GM12878 (cell line): ENCODE measurements at regions of chr3 and their contacts with region 1.

Region 1: DNA sequence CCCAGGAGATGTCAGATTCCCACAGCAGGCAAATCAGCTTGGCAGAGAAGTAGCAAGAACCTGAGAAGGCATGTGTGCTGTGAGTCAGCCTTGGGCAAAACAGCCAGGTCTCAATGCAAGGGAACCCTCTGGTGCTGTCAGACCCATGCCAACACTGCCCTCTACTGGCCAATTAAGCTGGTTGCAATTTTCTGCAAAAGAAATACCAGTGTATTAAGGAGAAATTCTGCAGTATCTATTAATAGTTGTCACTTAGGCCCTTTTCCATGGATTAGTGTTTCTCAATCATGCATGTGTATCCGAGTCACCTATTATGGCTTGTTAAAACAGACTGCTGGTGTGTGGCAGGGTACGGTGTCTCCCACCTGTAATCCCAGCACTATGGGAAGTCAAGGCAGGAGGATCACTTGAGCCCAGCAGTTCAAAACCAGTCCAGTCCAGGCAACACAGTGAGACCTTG is 26.2 kb downstream of the MAP4 start:
- DNase-seq: peak; percentile 37
- ATAC-seq: peak; percentile 98
- H3K4me3 ChIP-seq: no peak overlapping the region
- H3K27ac ChIP-seq: no peak overlapping the region
- H3K4me1 ChIP-seq: no peaks in the 10 kb centered on the region
- H3K27me3 ChIP-seq: no peaks in the 10 kb centered on the region
- CTCF ChIP-seq: peak; percentile 81 to 91 (median 90); a peak in 5 of 6 replicates
- EP300 ChIP-seq: no peak
- POLR2A ChIP-seq: no peak
- RAD21 ChIP-seq: peak; percentile 97

Region 2: GRCh38 chr3:47824541-47825473 is 165.2 kb before region 1 on chr3:
- CTCF ChIA-PET with region 1: interaction called, 28 read pairs
- POLR2A ChIA-PET with region 1: no interaction called
- RAD21 ChIA-PET with region 1: interaction called, 5 read pairs
- SMC1A ChIA-PET with region 1: interaction called, 10 read pairs
- in situ Hi-C with region 1: loop called (anchors 10 kb)
- intact Hi-C with region 1: no loop called
- DNase-seq: peak; percentile 25
- ATAC-seq: peak; percentile 100
- H3K4me3 ChIP-seq: peak overlapping the region; percentile 98
- H3K27ac ChIP-seq: peak overlapping the region; percentile 85
- H3K4me1 ChIP-seq: peaks cover 6% of the 10 kb centered on the region
- H3K27me3 ChIP-seq: no peaks in the 10 kb centered on the region
- CTCF ChIP-seq: peak; percentile 70 to 92 (median 86); a peak in 5 of 6 replicates
- EP300 ChIP-seq: no peak
- POLR2A ChIP-seq: peak; percentile 95
- RAD21 ChIP-seq: peak; percentile 38; the same call in 1 of the 2 replicates

Region 3: DNA sequence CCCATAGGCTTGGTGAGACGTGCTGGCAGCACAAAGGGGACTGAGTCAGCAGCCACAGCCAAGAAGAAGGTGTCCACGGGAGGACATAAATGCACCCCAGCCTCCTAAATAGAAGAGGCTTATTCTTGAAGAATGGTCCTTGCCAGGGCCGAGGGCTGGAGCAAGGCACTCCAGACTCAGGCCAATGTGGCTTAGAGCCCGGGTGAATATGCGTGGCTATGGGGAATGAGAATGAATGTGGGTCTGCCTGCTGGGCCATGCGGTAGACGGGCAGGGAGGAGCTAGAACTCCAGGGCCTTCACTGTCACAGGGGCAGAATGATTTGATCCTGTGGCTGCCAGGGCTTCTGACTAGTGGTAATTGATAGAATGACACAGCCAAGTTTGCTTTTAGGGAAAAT is 153.0 kb before region 1 on chr3:
- CTCF ChIA-PET with region 1: interaction called, 56 read pairs
- POLR2A ChIA-PET with region 1: interaction called, 3 read pairs
- RAD21 ChIA-PET with region 1: interaction called, 19 read pairs
- SMC1A ChIA-PET with region 1: interaction called, 15 read pairs
- in situ Hi-C with region 1: loop called (anchors 10 kb)
- intact Hi-C with region 1: loop called (anchors 5 kb)
- DNase-seq: no peak
- ATAC-seq: no peak
- H3K4me3 ChIP-seq: no peak overlapping the region
- H3K27ac ChIP-seq: no peak overlapping the region
- H3K4me1 ChIP-seq: no peaks in the 10 kb centered on the region
- H3K27me3 ChIP-seq: no peaks in the 10 kb centered on the region
- CTCF ChIP-seq: no peak
- EP300 ChIP-seq: no peak
- POLR2A ChIP-seq: no peak; the same call in 1 of the 2 replicates
- RAD21 ChIP-seq: no peak

Region 4: GRCh38 chr3:47865192-47865591 is 124.8 kb before region 1 on chr3:
- CTCF ChIA-PET with region 1: interaction called, 10 read pairs
- POLR2A ChIA-PET with region 1: no interaction called
- RAD21 ChIA-PET with region 1: interaction called, 4 read pairs
- SMC1A ChIA-PET with region 1: interaction called, 3 read pairs
- in situ Hi-C with region 1: no loop called
- intact Hi-C with region 1: no loop called
- DNase-seq: no peak
- ATAC-seq: no peak
- H3K4me3 ChIP-seq: no peak overlapping the region
- H3K27ac ChIP-seq: no peak overlapping the region
- H3K4me1 ChIP-seq: no peaks in the 10 kb centered on the region
- H3K27me3 ChIP-seq: no peaks in the 10 kb centered on the region
- CTCF ChIP-seq: no peak
- EP300 ChIP-seq: no peak
- POLR2A ChIP-seq: no peak
- RAD21 ChIP-seq: no peak

Region 5: DNA sequence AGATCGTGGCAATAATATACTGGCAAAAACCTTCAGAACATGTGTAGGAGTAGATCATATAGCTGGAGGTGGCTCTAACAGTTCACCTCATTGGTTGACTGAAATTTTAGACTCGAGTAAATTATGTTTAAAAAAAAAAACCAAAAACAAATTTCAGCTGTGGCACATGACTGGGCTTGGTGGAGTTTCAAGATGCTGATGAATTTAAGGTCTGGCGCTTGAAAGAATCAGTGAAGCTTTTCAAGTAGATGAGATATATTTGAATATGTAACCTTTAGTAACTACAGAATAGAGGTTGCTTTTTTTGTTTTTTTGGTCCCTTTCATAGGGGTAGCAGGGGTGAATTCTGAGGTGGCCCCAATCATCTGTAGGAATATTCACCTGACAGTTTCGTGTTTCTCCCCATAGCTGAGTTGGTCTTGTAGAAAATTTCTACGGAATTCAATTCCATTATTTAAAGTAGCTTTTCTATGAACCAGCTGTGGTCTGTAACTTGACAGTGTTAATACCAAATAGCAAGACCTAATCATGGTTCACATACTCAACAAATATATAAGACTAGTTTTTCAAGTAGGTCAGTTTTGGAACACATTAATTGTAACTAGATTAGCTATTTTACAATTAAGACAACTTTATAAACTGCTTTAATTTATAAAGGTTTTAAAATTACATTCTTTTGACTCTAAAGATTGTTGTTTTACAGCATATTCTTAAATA is 39.4 kb before region 1 on chr3:
- CTCF ChIA-PET with region 1: interaction called, 10 read pairs
- POLR2A ChIA-PET with region 1: no interaction called
- RAD21 ChIA-PET with region 1: interaction called, 10 read pairs
- SMC1A ChIA-PET with region 1: interaction called, 3 read pairs
- in situ Hi-C with region 1: no loop called
- intact Hi-C with region 1: no loop called
- DNase-seq: no peak
- ATAC-seq: peak; percentile 60
- H3K4me3 ChIP-seq: no peak overlapping the region
- H3K27ac ChIP-seq: no peak overlapping the region
- H3K4me1 ChIP-seq: peaks cover 4% of the 10 kb centered on the region; the same call in 1 of the 2 replicates
- H3K27me3 ChIP-seq: no peaks in the 10 kb centered on the region
- CTCF ChIP-seq: no peak
- EP300 ChIP-seq: no peak
- POLR2A ChIP-seq: no peak
- RAD21 ChIP-seq: no peak

Region 6: DNA sequence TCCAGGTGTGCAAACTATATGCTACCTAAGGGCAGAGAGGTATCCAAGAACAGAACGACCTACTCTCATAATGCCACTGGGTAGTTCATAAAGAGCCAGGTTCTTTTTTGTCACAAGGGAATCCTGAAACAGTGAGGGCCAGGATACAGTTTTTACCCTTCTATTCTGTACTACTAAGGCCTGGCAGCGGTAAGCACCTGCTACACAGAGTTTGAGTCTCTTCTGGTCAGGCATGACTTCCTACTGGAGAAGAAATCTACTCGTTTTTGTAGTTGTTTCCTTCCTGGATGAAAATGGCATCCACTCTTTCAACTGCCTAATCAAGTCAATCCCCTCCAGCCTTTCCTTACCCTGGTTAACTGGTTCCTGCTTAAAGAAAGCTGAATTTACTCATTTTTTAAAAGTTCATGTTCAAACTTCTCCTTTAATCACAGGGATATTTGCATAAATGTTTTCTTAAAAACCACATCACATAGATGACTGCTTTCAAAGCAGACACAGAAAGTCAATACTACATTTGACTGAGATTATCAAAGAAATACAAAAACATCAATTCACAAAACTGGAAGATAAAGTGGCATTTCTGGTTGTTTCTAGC is 13.8 kb before region 1 on chr3:
- CTCF ChIA-PET with region 1: interaction called, 21 read pairs
- POLR2A ChIA-PET with region 1: no interaction called
- RAD21 ChIA-PET with region 1: interaction called, 4 read pairs
- SMC1A ChIA-PET with region 1: interaction called, 7 read pairs
- in situ Hi-C with region 1: no loop called
- intact Hi-C with region 1: no loop called
- DNase-seq: no peak
- ATAC-seq: peak; percentile 78
- H3K4me3 ChIP-seq: no peak overlapping the region; the same call in 1 of the 2 replicates
- H3K27ac ChIP-seq: peak overlapping the region; percentile 63
- H3K4me1 ChIP-seq: peaks cover 17% of the 10 kb centered on the region
- H3K27me3 ChIP-seq: no peaks in the 10 kb centered on the region
- CTCF ChIP-seq: no peak
- EP300 ChIP-seq: no peak
- POLR2A ChIP-seq: no peak
- RAD21 ChIP-seq: no peak

Region 7: GRCh38 chr3:48001991-48002390 is 12.0 kb after region 1 on chr3:
- CTCF ChIA-PET with region 1: interaction called, 27 read pairs
- POLR2A ChIA-PET with region 1: interaction called, 4 read pairs
- RAD21 ChIA-PET with region 1: no interaction called
- SMC1A ChIA-PET with region 1: interaction called, 6 read pairs
- in situ Hi-C with region 1: no loop called
- intact Hi-C with region 1: no loop called
- DNase-seq: no peak
- ATAC-seq: no peak
- H3K4me3 ChIP-seq: no peak overlapping the region
- H3K27ac ChIP-seq: no peak overlapping the region
- H3K4me1 ChIP-seq: no peaks in the 10 kb centered on the region
- H3K27me3 ChIP-seq: no peaks in the 10 kb centered on the region
- CTCF ChIP-seq: no peak
- EP300 ChIP-seq: no peak
- POLR2A ChIP-seq: no peak
- RAD21 ChIP-seq: no peak

Region 8: DNA sequence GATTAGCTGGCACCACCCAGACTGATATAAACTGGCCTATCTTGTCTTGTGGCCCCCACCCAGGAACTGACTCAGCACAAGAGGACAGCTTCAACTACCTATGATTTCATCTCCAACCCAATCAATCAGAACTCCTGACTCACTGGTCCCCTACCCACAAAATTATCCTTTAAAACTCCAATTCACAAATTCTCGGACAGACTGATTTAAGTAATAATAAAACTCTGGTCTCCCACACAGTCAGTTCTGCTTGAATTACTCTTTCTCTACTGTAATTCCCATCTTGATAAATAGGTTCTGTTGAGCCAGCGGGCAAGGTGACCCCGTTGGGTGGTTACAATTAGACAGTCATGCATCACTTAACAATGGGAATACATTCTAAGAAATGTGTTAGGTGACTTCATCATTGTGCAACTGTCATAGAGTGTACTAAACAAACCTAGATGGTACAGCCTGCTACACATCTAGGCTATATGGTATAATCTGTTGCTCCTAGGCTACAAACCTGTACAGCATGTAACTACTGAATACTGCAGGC is 74.3 kb after region 1 on chr3:
- CTCF ChIA-PET with region 1: no interaction called
- POLR2A ChIA-PET with region 1: no interaction called
- RAD21 ChIA-PET with region 1: no interaction called
- SMC1A ChIA-PET with region 1: no interaction called
- in situ Hi-C with region 1: no loop called
- intact Hi-C with region 1: no loop called
- DNase-seq: no peak
- ATAC-seq: no peak
- H3K4me3 ChIP-seq: no peak overlapping the region
- H3K27ac ChIP-seq: no peak overlapping the region
- H3K4me1 ChIP-seq: no peaks in the 10 kb centered on the region
- H3K27me3 ChIP-seq: no peaks in the 10 kb centered on the region
- CTCF ChIP-seq: no peak
- EP300 ChIP-seq: no peak
- POLR2A ChIP-seq: no peak
- RAD21 ChIP-seq: no peak

Region 9: DNA sequence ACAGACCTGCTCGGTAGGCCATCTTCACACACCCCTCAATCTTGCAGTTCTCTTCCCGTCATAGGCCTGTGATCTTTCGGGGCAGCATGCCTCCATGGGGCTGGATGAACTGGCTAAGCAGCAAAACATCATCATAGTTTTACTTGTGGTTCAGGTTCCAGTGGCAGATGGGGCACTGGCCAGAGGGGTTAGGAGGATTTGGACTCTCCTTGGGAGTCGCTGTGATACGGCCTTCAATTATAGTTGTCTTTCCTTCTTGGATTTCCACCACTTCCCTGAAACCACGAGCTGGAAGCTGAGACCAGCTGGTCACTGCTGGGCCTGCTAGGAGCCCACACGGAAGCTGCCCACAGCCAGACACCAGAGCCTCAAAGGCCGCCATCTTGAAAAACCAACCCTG is 266.5 kb after region 1 on chr3:
- CTCF ChIA-PET with region 1: no interaction called
- POLR2A ChIA-PET with region 1: no interaction called
- RAD21 ChIA-PET with region 1: no interaction called
- SMC1A ChIA-PET with region 1: no interaction called
- in situ Hi-C with region 1: no loop called
- intact Hi-C with region 1: no loop called
- DNase-seq: no peak
- ATAC-seq: no peak
- H3K4me3 ChIP-seq: no peak overlapping the region
- H3K27ac ChIP-seq: no peak overlapping the region
- H3K4me1 ChIP-seq: no peaks in the 10 kb centered on the region
- H3K27me3 ChIP-seq: no peaks in the 10 kb centered on the region
- CTCF ChIP-seq: no peak
- EP300 ChIP-seq: no peak
- POLR2A ChIP-seq: no peak
- RAD21 ChIP-seq: no peak